HepG2 (cell line): ENCODE measurements at regions of chr11 and their contacts with region 1.

Region 1: GRCh38 chr11:67468835-67469811 is at the start of gene TMEM134:
- DNase-seq: peak; percentile 81
- ATAC-seq: peak; percentile 79
- H3K4me3 ChIP-seq: peak within 1 kb of the TSS; percentile 81 to 87 (median 81)
- H3K27ac ChIP-seq: peak within 1 kb of the TSS; percentile 56
- H3K4me1 ChIP-seq: peaks cover 69% of the 10 kb centered on the region
- H3K27me3 ChIP-seq: no peaks in the 10 kb centered on the region
- CTCF ChIP-seq: peak; percentile 90
- EP300 ChIP-seq: peak in 1 of 2 experiments; percentile 26; a peak in 2 of 4 replicates
- POLR2A ChIP-seq: peak; percentile 73 to 83
- RAD21 ChIP-seq: peak; percentile 89
- total RNA-seq, gene TMEM134: 5.1 and 6.9 TPM in 2 replicates

Region 2: DNA sequence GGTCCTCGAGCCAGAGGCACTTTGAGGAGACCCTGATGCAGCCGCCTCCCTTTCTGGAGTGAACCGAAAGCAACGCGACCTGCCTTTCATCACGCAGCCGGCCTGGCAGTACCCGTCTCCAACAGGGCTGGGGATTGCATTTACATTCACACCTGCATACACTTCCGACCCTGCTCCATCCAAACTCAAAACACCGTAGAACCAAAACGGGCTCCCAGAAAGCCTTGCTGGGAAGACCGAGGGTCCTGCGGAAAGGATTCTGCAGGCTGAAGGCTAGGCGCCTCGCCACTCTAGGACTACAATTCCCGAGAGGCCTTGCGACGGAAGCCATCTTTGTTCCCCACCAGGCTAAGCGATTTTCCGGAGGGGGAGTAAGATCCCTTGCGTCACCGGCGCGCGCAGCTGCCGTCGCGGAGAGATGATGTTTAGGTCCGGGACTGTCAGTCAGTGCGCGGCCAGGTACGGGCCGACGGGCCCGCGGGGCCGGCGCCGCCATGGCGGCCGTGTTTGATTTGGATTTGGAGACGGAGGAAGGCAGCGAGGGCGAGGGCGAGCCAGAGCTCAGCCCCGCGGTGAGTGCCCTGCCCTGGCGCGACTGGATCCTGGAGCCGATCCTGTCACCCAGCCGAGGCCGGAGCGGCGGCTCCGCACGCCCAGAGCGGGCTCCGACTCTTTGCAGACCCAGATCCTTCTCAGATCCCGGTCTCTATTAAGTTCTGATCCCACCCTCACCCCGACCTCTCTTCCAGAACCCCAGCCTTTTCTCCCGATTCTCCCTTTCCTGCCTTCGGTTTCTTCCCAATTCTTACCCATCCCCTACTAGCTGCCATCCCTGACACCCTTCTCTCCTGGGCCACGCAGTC is 40.8 kb before region 1 on chr11 and contains the start of gene RPS6KB2:
- CTCF ChIA-PET with region 1: no interaction called
- POLR2A ChIA-PET with region 1: interaction called, 4 read pairs
- in situ Hi-C with region 1: loop called (anchors 5 kb)
- intact Hi-C with region 1: no loop called
- DNase-seq: peak; percentile 93
- ATAC-seq: peak; percentile 81
- H3K4me3 ChIP-seq: peak within 1 kb of the TSS; percentile 84 to 98 (median 90)
- H3K27ac ChIP-seq: peak within 1 kb of the TSS; percentile 85
- H3K4me1 ChIP-seq: peaks cover 36% of the 10 kb centered on the region
- H3K27me3 ChIP-seq: no peaks in the 10 kb centered on the region; a peak in 1 of 5 replicates
- CTCF ChIP-seq: no peak
- EP300 ChIP-seq: peak in 1 of 2 experiments; percentile 32; a peak in 1 of 4 replicates
- POLR2A ChIP-seq: peak; percentile 80
- RAD21 ChIP-seq: no peak
- total RNA-seq, gene RPS6KB2: 35.3 and 54.8 TPM in 2 replicates

Region 3: DNA sequence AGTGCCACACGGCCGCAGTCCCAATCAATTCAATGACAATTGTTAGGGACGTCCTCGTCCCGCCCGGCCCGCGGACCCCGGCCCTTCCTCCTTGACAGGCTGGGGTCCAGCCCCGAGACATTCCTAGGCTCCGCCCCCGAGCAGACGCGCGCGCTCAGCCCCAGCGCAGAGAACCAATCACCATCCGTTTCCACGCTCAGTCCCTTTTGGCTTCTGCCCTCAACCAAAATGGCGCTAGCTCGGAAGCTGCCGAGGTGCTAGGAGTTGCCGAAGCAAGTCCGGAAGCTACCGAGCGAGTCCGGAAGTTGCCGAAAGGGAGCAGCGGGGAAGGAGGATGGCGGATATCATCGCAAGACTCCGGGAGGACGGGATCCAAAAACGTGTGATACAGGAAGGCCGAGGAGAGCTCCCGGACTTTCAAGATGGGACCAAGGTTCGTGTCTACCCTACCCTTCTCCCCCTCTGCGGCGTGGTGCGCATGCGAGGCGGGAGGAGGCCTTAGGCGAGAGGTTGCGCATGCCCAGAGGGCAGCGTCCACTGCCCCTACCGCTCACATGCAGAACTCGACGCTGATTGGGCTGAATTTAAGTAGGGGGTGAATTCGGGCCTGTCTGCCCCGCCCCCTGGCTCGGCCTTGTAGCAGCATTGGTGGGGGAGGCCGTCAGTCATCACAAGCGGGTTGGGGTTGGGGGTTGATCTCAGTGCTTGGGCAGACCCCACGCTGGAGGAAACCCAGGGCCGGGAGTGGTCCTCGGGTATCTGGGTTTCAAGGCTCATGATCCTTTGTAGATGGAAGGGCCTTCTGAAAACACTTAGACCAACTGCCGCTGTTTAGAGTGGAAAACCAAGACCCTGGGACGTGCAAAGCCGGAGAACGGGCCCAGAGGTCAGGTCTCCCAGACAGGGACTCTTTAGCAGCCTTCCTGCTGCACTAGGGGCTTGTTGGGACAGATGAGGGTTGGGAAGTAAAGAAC is 14.0 kb after region 1 on chr11 and contains the start of gene AIP:
- CTCF ChIA-PET with region 1: no interaction called
- POLR2A ChIA-PET with region 1: interaction called, 12 read pairs
- in situ Hi-C with region 1: no loop called
- intact Hi-C with region 1: no loop called
- DNase-seq: peak; percentile 95
- ATAC-seq: peak; percentile 97
- H3K4me3 ChIP-seq: peak within 1 kb of the TSS; percentile 59 to 75 (median 59)
- H3K27ac ChIP-seq: peak within 1 kb of the TSS; percentile 66
- H3K4me1 ChIP-seq: peaks cover 34% of the 10 kb centered on the region
- H3K27me3 ChIP-seq: no peaks in the 10 kb centered on the region
- CTCF ChIP-seq: peak; percentile 15; the same call in 1 of the 2 replicates
- EP300 ChIP-seq: no peak
- POLR2A ChIP-seq: peak; percentile 62 to 68
- RAD21 ChIP-seq: no peak
- total RNA-seq, gene AIP: 51.8 and 54.7 TPM in 2 replicates

Region 4: GRCh38 chr11:67563354-67564114 is 94.4 kb after region 1 on chr11:
- CTCF ChIA-PET with region 1: no interaction called
- POLR2A ChIA-PET with region 1: no interaction called
- in situ Hi-C with region 1: no loop called
- intact Hi-C with region 1: no loop called
- DNase-seq: no peak
- ATAC-seq: peak; percentile 46; the same call in 2 of the 3 replicates
- H3K4me3 ChIP-seq: peak overlapping the region in 1 of 3 experiments; percentile 39; a peak in 1 of 6 replicates
- H3K27ac ChIP-seq: no peak overlapping the region
- H3K4me1 ChIP-seq: peaks cover 34% of the 10 kb centered on the region
- H3K27me3 ChIP-seq: no peaks in the 10 kb centered on the region
- CTCF ChIP-seq: no peak
- EP300 ChIP-seq: no peak
- POLR2A ChIP-seq: no peak
- RAD21 ChIP-seq: no peak